T-cell (primary cell): ENCODE measurements at regions of chrX and their contacts with region 1.

Region 1: GRCh38 chrX:71181910-71182799 is 37.5 kb downstream of the NLGN3 start:
- DNase-seq: peak; percentile 49 to 90 (median 77)
- ATAC-seq: peak; percentile 91 to 94 (median 94)
- H3K4me3 ChIP-seq: peak overlapping the region; percentile 67 to 71
- H3K4me3 Mint-ChIP-seq: peak overlapping the region; percentile 88 to 92 (median 89)
- H3K27ac ChIP-seq: peak overlapping the region; percentile 88
- H3K27ac Mint-ChIP-seq: peak overlapping the region; percentile 98 to 99
- H3K4me1 ChIP-seq: peaks cover 2 to 19% of the 10 kb centered on the region in 2 experiments
- H3K4me1 Mint-ChIP-seq: peaks cover 6 to 29% (median 16%) of the 10 kb centered on the region in 3 donors
- H3K27me3 ChIP-seq: no peaks in the 10 kb centered on the region
- H3K27me3 Mint-ChIP-seq: peaks cover 0 to 10% of the 10 kb centered on the region in 2 donors

Region 2: GRCh38 chrX:70970482-70970995 is 211.6 kb before region 1 on chrX:
- CTCF ChIA-PET with region 1: interaction called, 6 to 11 read pairs
- POLR2A ChIA-PET with region 1: interaction called in 1 of 2 experiments, 5 read pairs
- DNase-seq: peak in 1 of 35 experiments; percentile 29
- ATAC-seq: no peak
- H3K4me3 ChIP-seq: no peak overlapping the region
- H3K4me3 Mint-ChIP-seq: peak overlapping the region; percentile 1 to 37 (median 17)
- H3K27ac ChIP-seq: no peak overlapping the region
- H3K27ac Mint-ChIP-seq: no peak overlapping the region
- H3K4me1 ChIP-seq: no peaks in the 10 kb centered on the region
- H3K4me1 Mint-ChIP-seq: peaks cover 2 to 8% (median 6%) of the 10 kb centered on the region in 3 donors
- H3K27me3 ChIP-seq: no peaks in the 10 kb centered on the region
- H3K27me3 Mint-ChIP-seq: peaks cover 0 to 6% of the 10 kb centered on the region in 2 donors

Region 3: GRCh38 chrX:71068049-71068763 is 113.9 kb before region 1 on chrX and contains the start of gene SNX12:
- CTCF ChIA-PET with region 1: no interaction called
- POLR2A ChIA-PET with region 1: no interaction called
- DNase-seq: peak; percentile 77 to 92 (median 85)
- ATAC-seq: peak; percentile 92 to 96 (median 93)
- H3K4me3 ChIP-seq: peak within 1 kb of the TSS; percentile 71 to 77
- H3K4me3 Mint-ChIP-seq: peak within 1 kb of the TSS; percentile 83 to 92 (median 85)
- H3K27ac ChIP-seq: peak within 1 kb of the TSS; percentile 87
- H3K27ac Mint-ChIP-seq: peak within 1 kb of the TSS; percentile 94 to 95
- H3K4me1 ChIP-seq: peaks cover 0 to 13% of the 10 kb centered on the region in 2 experiments
- H3K4me1 Mint-ChIP-seq: peaks cover 8 to 22% (median 22%) of the 10 kb centered on the region in 3 donors
- H3K27me3 ChIP-seq: no peaks in the 10 kb centered on the region
- H3K27me3 Mint-ChIP-seq: peaks cover 0 to 18% of the 10 kb centered on the region in 2 donors
- total RNA-seq, gene SNX12: 29.6 to 42.5 (median 33.1) TPM

Region 4: GRCh38 chrX:71222929-71223328 is 40.8 kb after region 1 on chrX and contains the start of gene GJB1:
- CTCF ChIA-PET with region 1: no interaction called
- POLR2A ChIA-PET with region 1: no interaction called
- DNase-seq: no peak
- ATAC-seq: no peak
- H3K4me3 ChIP-seq: no peak within 1 kb of the TSS
- H3K4me3 Mint-ChIP-seq: no peak within 1 kb of the TSS
- H3K27ac ChIP-seq: no peak within 1 kb of the TSS
- H3K27ac Mint-ChIP-seq: no peak within 1 kb of the TSS
- H3K4me1 ChIP-seq: no peaks in the 10 kb centered on the region
- H3K4me1 Mint-ChIP-seq: no peaks in the 10 kb centered on the region
- H3K27me3 ChIP-seq: peaks cover 0 to 4% of the 10 kb centered on the region in 2 experiments
- H3K27me3 Mint-ChIP-seq: peaks cover 3 to 27% of the 10 kb centered on the region in 2 donors
- total RNA-seq, gene GJB1: 0.23 TPM in 2 of 5 donors, not detected in the others

Region 5: DNA sequence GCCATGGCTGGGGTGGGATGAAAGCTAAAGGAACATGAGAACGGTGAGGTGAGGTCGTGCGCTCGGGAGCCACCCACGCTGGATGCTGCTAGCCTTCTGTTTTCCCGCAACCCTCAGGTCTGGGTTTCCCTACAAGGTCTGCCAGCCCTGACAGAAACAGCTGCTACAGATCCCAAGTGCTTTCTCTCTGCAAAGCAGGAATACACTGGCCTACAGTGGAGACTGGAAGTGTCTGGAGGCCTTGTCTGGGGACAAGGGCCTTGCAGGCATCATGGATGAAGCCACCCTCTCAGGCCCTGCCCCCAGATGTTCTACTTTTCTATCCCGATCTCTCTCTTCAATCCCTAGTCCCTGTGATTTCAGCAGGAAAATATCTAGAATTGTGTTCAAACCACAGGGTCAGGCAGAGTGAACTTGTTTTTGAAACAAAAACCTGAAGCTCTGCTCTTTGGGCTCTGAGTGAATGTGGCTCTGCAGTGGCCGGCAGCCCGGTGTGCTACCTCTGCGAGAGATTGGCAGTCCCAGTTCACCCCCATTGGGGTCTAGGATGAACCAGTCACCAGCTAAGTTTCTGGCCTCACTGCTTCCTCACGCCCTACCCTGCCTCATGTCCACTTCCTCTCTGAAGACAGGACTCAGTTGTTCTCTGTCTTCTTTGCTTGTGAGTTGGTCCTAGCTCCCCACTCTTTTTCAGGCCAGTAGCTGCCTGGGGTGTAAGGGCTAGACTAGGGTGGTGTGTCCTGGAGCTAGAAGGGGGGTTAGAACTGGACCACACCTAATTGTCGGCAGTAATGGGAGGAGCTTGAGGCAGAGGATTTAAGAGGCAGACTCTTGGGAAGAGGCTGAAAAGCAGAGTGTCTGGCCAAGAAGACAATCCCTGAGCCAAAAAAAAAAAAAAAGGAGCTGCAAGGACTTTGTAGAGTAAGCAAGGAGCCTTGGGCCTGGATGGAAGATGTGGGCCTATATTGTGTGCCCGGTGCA is 860.0 kb after region 1 on chrX:
- CTCF ChIA-PET with region 1: no interaction called
- POLR2A ChIA-PET with region 1: no interaction called
- DNase-seq: no peak
- ATAC-seq: no peak
- H3K4me3 ChIP-seq: no peak overlapping the region
- H3K4me3 Mint-ChIP-seq: no peak overlapping the region
- H3K27ac ChIP-seq: no peak overlapping the region
- H3K27ac Mint-ChIP-seq: peak overlapping the region in 1 of 2 donors; percentile 5
- H3K4me1 ChIP-seq: peaks cover 0 to 21% of the 10 kb centered on the region in 2 experiments
- H3K4me1 Mint-ChIP-seq: peaks cover 16 to 40% (median 22%) of the 10 kb centered on the region in 3 donors
- H3K27me3 ChIP-seq: peaks cover 0 to 2% of the 10 kb centered on the region in 2 experiments
- H3K27me3 Mint-ChIP-seq: peaks cover 0 to 26% of the 10 kb centered on the region in 2 donors